Activated naive CD4-positive, alpha-beta T cell treated with anti-CD3 and anti-CD28 coated beads for 36 hours (primary cell): ENCODE measurements at regions of chr20 and their contacts with region 1.

Region 1: GRCh38 chr20:43514062-43514999 is 6.8 kb downstream of the L3MBTL1 start:
- DNase-seq: peak; percentile 95
- H3K4me3 Mint-ChIP-seq: peak overlapping the region; percentile 88
- H3K27ac Mint-ChIP-seq: peak overlapping the region; percentile 81
- H3K4me1 Mint-ChIP-seq: peaks cover 12% of the 10 kb centered on the region
- H3K27me3 Mint-ChIP-seq: peaks cover 3% of the 10 kb centered on the region

Region 2: DNA sequence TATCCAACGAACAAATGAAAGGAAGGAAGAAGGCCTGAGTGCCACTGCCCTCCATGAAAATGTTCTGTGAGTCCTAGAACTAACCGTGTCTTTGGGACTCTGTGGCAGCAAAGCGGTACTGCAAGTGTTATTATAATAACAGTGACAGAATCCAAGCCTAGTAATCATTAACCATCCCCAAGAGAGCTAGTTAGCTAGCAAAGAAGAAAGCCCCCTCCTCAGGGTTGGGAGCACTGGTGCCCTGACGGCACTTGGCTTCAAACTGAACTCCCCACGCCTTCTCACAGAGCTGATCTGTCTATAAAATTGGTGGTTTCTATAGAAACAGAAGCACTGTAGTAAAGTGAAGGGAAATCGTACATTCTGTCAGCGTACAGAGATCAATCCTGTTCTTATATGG is 564.4 kb before region 1 on chr20:
- CTCF ChIA-PET with region 1: no interaction called
- intact Hi-C with region 1: no loop called
- DNase-seq: no peak
- H3K4me3 Mint-ChIP-seq: no peak overlapping the region
- H3K27ac Mint-ChIP-seq: no peak overlapping the region
- H3K4me1 Mint-ChIP-seq: no peaks in the 10 kb centered on the region
- H3K27me3 Mint-ChIP-seq: no peaks in the 10 kb centered on the region

Region 3: GRCh38 chr20:43492101-43492500 is 22.2 kb before region 1 on chr20:
- CTCF ChIA-PET with region 1: no interaction called
- intact Hi-C with region 1: loop called (anchors 1 kb)
- DNase-seq: no peak
- H3K4me3 Mint-ChIP-seq: no peak overlapping the region
- H3K27ac Mint-ChIP-seq: no peak overlapping the region
- H3K4me1 Mint-ChIP-seq: peaks cover 4% of the 10 kb centered on the region
- H3K27me3 Mint-ChIP-seq: no peaks in the 10 kb centered on the region

Region 4: DNA sequence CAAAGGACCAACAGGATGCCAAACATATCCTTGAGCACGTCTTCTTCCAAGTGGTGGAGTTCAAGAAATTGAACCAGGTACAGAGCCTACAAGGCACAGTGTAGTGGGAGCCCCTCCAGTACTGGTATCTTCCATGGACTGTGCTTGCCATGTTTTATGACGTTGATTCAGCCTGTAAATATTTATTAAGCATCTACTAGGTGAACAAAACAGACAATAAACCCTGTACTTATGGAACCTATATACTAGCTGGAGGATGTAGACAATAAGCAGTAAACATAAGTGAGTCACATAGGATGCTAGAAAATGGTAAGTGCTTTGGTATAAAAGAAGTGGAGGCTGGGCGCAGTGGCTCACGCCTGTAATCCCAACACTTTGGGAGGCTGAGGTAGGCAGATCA is 128.2 kb after region 1 on chr20:
- CTCF ChIA-PET with region 1: no interaction called
- intact Hi-C with region 1: no loop called
- DNase-seq: no peak
- H3K4me3 Mint-ChIP-seq: no peak overlapping the region
- H3K27ac Mint-ChIP-seq: no peak overlapping the region
- H3K4me1 Mint-ChIP-seq: no peaks in the 10 kb centered on the region
- H3K27me3 Mint-ChIP-seq: no peaks in the 10 kb centered on the region

Region 5: GRCh38 chr20:43666376-43667328 is 152.3 kb after region 1 on chr20 and contains the start of gene MYBL2:
- CTCF ChIA-PET with region 1: no interaction called
- intact Hi-C with region 1: loop called (anchors 1 kb)
- DNase-seq: peak; percentile 74
- H3K4me3 Mint-ChIP-seq: peak within 1 kb of the TSS; percentile 84
- H3K27ac Mint-ChIP-seq: no peak within 1 kb of the TSS
- H3K4me1 Mint-ChIP-seq: peaks cover 4% of the 10 kb centered on the region
- H3K27me3 Mint-ChIP-seq: peaks cover 9% of the 10 kb centered on the region
- total RNA-seq, gene MYBL2: 102 to 106 TPM